ENCODE measurements at regions of chr12 and their contacts with region 1.

Region 1: DNA sequence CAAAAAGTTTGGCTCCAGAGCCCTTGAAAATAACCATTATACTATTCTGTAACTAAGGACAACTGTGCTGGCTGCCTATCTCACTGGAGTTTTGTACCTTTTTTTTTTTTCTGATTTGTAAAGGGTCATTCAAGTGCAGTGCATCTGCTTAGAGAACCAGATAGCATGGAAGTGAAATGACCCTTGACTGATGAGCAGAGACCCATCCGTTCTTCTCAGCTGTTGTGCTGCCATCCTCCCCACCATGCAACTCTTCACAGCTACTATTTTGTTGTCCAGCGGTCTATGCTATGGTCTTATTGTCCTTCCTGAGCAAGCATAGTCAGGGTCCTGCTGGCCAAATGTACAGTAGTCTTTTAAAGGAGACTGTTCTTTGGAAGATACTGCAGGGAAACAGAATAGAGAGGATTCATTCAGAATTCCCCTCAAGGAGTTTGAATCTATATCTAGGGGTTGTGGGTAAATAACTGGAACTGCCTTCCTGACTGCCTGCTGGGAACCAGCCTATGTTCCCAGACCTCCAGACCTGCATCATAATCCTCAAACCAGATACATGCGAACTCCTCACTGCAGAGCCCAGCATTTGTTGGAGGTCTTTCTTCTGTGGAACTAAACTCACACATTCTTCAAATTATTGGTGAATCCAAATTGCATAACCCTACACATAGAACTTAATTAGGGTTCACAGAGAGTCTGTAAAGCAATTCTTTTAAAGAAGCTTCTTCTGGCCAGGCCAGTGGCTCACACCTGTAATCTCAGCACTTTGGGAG is 41.1 kb downstream of the GPR19 start:
- DNase-seq: no peak
- H3K4me3 ChIP-seq: no peak overlapping the region
- H3K4me3 Mint-ChIP-seq: no peak overlapping the region
- H3K27ac ChIP-seq: no peak overlapping the region
- H3K27ac Mint-ChIP-seq: peak overlapping the region in 2 of 7 donors; percentile 70 to 79
- H3K4me1 ChIP-seq: peaks cover 13% of the 10 kb centered on the region
- H3K4me1 Mint-ChIP-seq: peaks cover 13 to 19% (median 14%) of the 10 kb centered on the region in 4 donors
- H3K27me3 ChIP-seq: no peaks in the 10 kb centered on the region
- H3K27me3 Mint-ChIP-seq: no peaks in the 10 kb centered on the region

Region 2: DNA sequence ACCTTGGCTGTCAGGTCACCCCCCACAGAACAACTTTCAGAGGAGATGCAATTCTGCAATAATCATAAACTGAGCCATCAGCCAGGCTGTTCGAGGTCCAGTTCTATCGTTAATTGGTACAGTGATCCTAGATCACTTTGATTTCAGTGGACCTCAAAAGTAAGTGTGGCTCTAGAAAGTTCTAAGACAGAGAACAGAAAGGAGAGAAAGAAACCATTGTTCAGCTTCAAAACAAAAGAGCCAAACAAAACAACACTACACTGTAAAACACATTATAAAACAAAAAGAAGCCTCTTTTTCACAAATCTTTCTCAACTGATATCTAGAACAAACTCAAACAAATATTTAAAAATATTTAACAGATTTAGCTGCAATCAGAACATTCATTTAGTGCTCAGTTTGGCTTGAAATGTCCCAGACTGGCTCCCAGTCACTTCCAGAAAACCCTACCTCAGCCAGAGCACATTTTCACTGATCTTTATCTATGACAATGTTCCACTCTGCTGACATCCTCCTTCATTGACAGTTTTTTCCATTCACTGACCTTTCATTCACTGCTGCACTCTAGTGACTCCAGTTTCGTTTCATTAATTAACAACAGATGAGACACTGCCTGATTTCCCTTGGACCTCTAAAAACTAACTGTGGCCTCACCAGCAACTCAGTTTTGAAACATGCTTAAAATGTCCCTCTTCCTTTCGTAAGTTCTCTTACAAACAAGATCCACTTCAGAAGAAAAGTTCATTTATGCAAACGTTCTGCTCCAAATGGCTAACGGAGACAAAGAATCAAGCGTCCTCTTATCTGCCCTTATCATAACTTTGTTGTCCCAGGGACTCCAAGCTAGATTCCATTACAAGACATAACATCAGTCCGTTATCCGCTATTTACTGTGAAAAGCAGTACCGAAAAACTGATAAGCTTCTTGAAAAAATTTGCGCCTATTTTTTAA is 149.1 kb before region 1 on chr12:
- CTCF ChIA-PET with region 1: interaction called, 8 read pairs
- POLR2A ChIA-PET with region 1: no interaction called
- intact Hi-C with region 1: loop called (anchors 5 kb)
- DNase-seq: peak in 4 of 5 donors; percentile 28 to 42 (median 32)
- H3K4me3 ChIP-seq: no peak overlapping the region
- H3K4me3 Mint-ChIP-seq: peak overlapping the region in 7 of 8 donors; percentile 37 to 84 (median 73)
- H3K27ac ChIP-seq: peak overlapping the region; percentile 48
- H3K27ac Mint-ChIP-seq: peak overlapping the region; percentile 66 to 95 (median 90)
- H3K4me1 ChIP-seq: peaks cover 65% of the 10 kb centered on the region
- H3K4me1 Mint-ChIP-seq: peaks cover 53 to 77% (median 61%) of the 10 kb centered on the region in 4 donors
- H3K27me3 ChIP-seq: no peaks in the 10 kb centered on the region
- H3K27me3 Mint-ChIP-seq: no peaks in the 10 kb centered on the region

Region 3: DNA sequence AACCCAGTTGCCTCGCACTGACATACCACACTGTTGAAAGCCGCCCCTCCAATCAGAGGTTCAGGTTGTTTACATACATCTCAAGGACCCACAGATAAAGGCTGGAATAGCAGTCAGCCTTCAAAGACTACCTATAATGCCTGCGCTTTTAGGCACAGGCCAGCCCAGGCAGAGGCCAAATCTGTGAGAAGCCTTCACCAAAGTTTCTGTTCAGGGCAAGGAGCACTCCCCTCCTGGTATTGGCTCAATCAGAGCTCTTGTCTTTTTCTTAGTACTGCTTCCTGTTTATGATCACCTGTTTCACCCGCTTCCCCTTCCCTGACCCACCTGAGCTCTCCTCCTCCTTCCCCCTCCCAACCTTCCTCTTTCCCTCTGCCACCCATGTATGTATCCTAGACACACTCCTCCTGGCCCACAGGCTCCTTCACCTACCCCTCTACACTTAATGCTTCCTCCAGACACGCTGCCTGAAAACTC is 127.0 kb before region 1 on chr12:
- CTCF ChIA-PET with region 1: interaction called, 11 read pairs
- POLR2A ChIA-PET with region 1: interaction called, 3 read pairs
- intact Hi-C with region 1: no loop called
- DNase-seq: peak in 3 of 5 donors; percentile 25 to 43 (median 31)
- H3K4me3 ChIP-seq: no peak overlapping the region
- H3K4me3 Mint-ChIP-seq: peak overlapping the region in 7 of 8 donors; percentile 40 to 80 (median 71)
- H3K27ac ChIP-seq: peak overlapping the region; percentile 56
- H3K27ac Mint-ChIP-seq: peak overlapping the region; percentile 64 to 96 (median 94)
- H3K4me1 ChIP-seq: peaks cover 52% of the 10 kb centered on the region
- H3K4me1 Mint-ChIP-seq: peaks cover 37 to 61% (median 52%) of the 10 kb centered on the region in 4 donors
- H3K27me3 ChIP-seq: no peaks in the 10 kb centered on the region
- H3K27me3 Mint-ChIP-seq: no peaks in the 10 kb centered on the region

Region 4: GRCh38 chr12:12630850-12631249 is 24.0 kb before region 1 on chr12:
- CTCF ChIA-PET with region 1: interaction called, 25 read pairs
- POLR2A ChIA-PET with region 1: no interaction called
- intact Hi-C with region 1: no loop called
- DNase-seq: no peak
- H3K4me3 ChIP-seq: no peak overlapping the region
- H3K4me3 Mint-ChIP-seq: peak overlapping the region in 7 of 8 donors; percentile 29 to 75 (median 55)
- H3K27ac ChIP-seq: no peak overlapping the region
- H3K27ac Mint-ChIP-seq: peak overlapping the region in 6 of 7 donors; percentile 7 to 86 (median 52)
- H3K4me1 ChIP-seq: peaks cover 56% of the 10 kb centered on the region
- H3K4me1 Mint-ChIP-seq: peaks cover 43 to 72% (median 61%) of the 10 kb centered on the region in 4 donors
- H3K27me3 ChIP-seq: no peaks in the 10 kb centered on the region
- H3K27me3 Mint-ChIP-seq: no peaks in the 10 kb centered on the region

Region 5: GRCh38 chr12:12668005-12668404 is 13.1 kb after region 1 on chr12:
- CTCF ChIA-PET with region 1: interaction called, 11 read pairs
- POLR2A ChIA-PET with region 1: no interaction called
- intact Hi-C with region 1: no loop called
- DNase-seq: no peak
- H3K4me3 ChIP-seq: no peak overlapping the region
- H3K4me3 Mint-ChIP-seq: no peak overlapping the region
- H3K27ac ChIP-seq: no peak overlapping the region
- H3K27ac Mint-ChIP-seq: no peak overlapping the region
- H3K4me1 ChIP-seq: no peaks in the 10 kb centered on the region
- H3K4me1 Mint-ChIP-seq: peaks cover 0 to 3% (median 0%) of the 10 kb centered on the region in 4 donors
- H3K27me3 ChIP-seq: no peaks in the 10 kb centered on the region
- H3K27me3 Mint-ChIP-seq: no peaks in the 10 kb centered on the region

Region 6: DNA sequence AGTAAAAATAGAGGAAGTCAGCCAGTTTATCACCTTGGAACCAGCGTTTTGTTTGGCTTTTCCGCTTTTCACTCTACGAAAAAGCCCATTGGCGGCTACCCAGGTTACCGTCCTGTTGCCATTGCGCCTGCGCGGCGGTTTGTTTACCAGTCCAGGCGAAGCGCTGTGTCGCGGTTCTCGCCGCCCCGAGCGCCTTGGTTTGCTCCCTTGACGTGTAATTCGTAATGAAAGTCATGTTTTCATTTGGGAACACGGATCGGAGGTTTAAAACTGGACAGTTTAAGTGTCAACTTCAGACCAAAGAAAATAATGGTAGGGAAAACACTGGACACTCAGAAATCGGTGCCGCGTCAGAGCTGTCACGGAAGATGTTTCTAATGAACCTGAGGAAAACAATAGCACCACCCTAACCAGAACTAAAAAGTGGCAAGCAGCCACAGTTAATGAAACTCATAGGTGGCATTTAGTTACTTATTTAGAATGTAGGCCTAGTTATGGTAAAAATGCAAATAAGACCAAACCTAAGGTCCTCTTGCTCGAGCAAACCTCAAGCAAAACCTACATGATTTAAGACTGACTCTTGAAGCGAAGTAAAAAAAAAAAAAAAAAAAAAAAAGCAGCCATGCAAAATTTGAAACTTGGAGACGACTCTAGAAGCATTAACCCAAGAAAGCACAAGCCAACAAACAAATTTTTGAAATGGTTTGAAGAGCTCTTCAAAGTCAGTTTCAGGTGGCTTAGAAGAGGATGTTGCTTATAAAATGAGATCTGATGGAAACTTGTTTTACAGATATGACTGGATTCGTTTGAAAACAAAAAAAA is 41.9 kb after region 1 on chr12:
- CTCF ChIA-PET with region 1: interaction called, 16 read pairs
- POLR2A ChIA-PET with region 1: interaction called, 3 read pairs
- intact Hi-C with region 1: no loop called
- DNase-seq: peak; percentile 93 to 96 (median 95)
- H3K4me3 ChIP-seq: peak overlapping the region; percentile 37 to 74
- H3K4me3 Mint-ChIP-seq: peak overlapping the region; percentile 86 to 97 (median 94)
- H3K27ac ChIP-seq: peak overlapping the region; percentile 87
- H3K27ac Mint-ChIP-seq: peak overlapping the region; percentile 98 to 100 (median 100)
- H3K4me1 ChIP-seq: peaks cover 24% of the 10 kb centered on the region
- H3K4me1 Mint-ChIP-seq: peaks cover 16 to 41% (median 30%) of the 10 kb centered on the region in 4 donors
- H3K27me3 ChIP-seq: no peaks in the 10 kb centered on the region
- H3K27me3 Mint-ChIP-seq: no peaks in the 10 kb centered on the region